Naive thymus-derived CD4-positive, alpha-beta T cell (primary cell): ENCODE measurements at regions of chr2 and their contacts with region 1.

Region 1: GRCh38 chr2:10302479-10303180 is at the start of gene HPCAL1:
- DNase-seq: peak; percentile 69 to 90 (median 84)
- ATAC-seq: peak; percentile 85
- H3K4me3 ChIP-seq: peak within 1 kb of the TSS; percentile 72
- H3K4me3 Mint-ChIP-seq: peak within 1 kb of the TSS; percentile 89 to 100 (median 99)
- H3K27ac ChIP-seq: peak within 1 kb of the TSS; percentile 78
- H3K27ac Mint-ChIP-seq: peak within 1 kb of the TSS; percentile 85 to 97 (median 94)
- H3K4me1 ChIP-seq: peaks cover 42 to 62% of the 10 kb centered on the region in 2 donors
- H3K4me1 Mint-ChIP-seq: peaks cover 46 to 77% (median 66%) of the 10 kb centered on the region in 7 donors
- H3K27me3 ChIP-seq: no peaks in the 10 kb centered on the region
- H3K27me3 Mint-ChIP-seq: no peaks in the 10 kb centered on the region
- total RNA-seq, gene HPCAL1: 44.9 to 90.5 (median 65.8) TPM

Region 2: DNA sequence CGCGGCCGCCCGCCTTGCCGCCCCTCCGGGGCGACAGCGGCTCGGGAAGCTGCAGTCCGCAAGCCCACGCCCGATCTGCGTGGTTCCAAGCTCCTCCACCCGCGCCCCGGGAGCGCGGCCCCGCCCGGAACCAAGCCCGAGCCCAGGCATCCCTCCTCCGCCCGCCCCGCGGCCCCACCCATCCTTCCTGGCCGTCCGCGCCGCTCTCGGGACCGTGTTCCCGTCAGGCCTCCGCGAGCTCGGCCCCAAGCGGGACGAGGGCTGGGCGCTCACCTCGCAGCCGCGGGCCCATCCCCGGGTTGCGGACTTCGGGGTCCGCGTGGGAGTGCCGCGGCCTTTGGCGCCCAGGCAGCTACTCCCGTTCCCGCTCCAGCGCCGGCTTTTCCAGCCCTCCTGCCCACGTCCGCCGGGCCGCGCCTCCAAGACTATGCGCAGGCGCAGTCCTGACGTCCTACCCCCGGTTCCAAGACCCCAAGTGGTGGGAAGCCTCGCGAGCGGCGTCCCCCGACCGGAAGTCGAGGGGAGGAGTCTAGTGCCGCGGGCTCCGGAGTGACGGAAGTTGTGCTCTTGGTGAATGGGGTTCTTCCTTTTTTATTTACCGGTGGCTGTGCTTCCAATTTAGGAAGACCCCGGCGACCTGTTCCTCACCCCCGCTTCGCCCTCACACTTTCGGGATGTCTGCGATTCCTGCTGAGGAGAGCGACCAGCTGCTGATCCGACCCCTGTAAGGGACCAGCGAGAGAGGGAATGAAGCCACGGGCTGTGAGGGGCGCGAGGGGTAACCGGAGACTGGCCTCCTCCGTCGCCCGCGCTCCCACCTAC is 879.3 kb before region 1 on chr2 and contains the starts of genes CPSF3 and ITGB1BP1:
- CTCF ChIA-PET with region 1: no interaction called
- POLR2A ChIA-PET with region 1: no interaction called
- intact Hi-C with region 1: loop called (anchors 2 kb)
- DNase-seq: peak; percentile 88 to 98 (median 94)
- ATAC-seq: peak; percentile 92
- H3K4me3 ChIP-seq: peak within 1 kb of the TSS; percentile 90
- H3K4me3 Mint-ChIP-seq: peak within 1 kb of the TSS in 5 of 10 donors; percentile 87 to 95 (median 92)
- H3K27ac ChIP-seq: peak within 1 kb of the TSS; percentile 84
- H3K27ac Mint-ChIP-seq: peak within 1 kb of the TSS in 8 of 9 donors; percentile 82 to 97 (median 92)
- H3K4me1 ChIP-seq: peaks cover 22 to 24% of the 10 kb centered on the region in 2 donors
- H3K4me1 Mint-ChIP-seq: peaks cover 20 to 41% (median 28%) of the 10 kb centered on the region in 7 donors
- H3K27me3 ChIP-seq: no peaks in the 10 kb centered on the region
- H3K27me3 Mint-ChIP-seq: no peaks in the 10 kb centered on the region
- total RNA-seq, gene CPSF3: 18.0 to 47.8 (median 21.7) TPM
- total RNA-seq, gene ITGB1BP1: 45.1 to 107 (median 54.3) TPM

Region 3: DNA sequence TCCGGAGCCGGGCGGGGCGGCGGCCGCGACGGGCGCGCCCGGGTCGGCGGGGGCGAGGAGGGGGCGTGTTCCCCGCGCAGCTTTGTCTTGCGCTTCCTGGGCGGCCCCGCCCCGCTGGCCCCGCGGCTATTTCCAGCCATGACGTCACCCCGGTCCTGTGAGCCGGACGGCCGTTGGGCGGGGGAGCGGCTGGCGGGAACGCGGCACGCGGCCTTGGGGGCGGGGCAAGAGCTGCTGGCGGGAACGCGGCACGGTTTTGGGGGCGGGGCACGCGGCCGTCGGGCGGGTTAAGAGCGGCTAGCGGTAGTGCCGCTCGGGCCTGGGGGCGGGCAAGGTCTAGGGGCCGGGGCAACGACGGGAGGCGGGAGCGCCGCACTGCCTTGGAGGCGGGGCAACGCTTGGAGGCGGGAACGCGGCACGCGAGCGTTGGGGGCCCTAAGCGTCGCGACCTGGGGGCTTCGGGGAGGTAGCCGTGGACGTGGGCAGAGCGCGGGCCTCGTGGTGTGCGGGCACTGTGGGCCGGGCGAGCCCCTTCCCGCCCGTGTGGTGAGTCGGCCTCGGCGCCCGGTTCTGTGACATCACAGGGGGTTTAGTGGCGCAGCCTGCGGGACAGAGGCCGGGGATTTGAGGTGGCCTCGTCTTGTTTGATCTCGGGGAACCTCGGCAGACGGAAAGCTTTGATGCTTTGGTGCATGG is 258.6 kb before region 1 on chr2:
- CTCF ChIA-PET with region 1: interaction called, 3 read pairs
- POLR2A ChIA-PET with region 1: no interaction called
- intact Hi-C with region 1: loop called in 1 of 2 experiments (anchors 2 kb)
- DNase-seq: peak; percentile 79 to 93 (median 89)
- ATAC-seq: peak; percentile 73
- H3K4me3 ChIP-seq: peak overlapping the region; percentile 48
- H3K4me3 Mint-ChIP-seq: peak overlapping the region; percentile 76 to 89 (median 84)
- H3K27ac ChIP-seq: peak overlapping the region; percentile 76
- H3K27ac Mint-ChIP-seq: peak overlapping the region; percentile 82 to 95 (median 88)
- H3K4me1 ChIP-seq: peaks cover 6% of the 10 kb centered on the region in 2 donors
- H3K4me1 Mint-ChIP-seq: peaks cover 14 to 35% (median 29%) of the 10 kb centered on the region in 7 donors
- H3K27me3 ChIP-seq: no peaks in the 10 kb centered on the region
- H3K27me3 Mint-ChIP-seq: peaks cover 0 to 31% (median 0%) of the 10 kb centered on the region in 5 donors

Region 4: DNA sequence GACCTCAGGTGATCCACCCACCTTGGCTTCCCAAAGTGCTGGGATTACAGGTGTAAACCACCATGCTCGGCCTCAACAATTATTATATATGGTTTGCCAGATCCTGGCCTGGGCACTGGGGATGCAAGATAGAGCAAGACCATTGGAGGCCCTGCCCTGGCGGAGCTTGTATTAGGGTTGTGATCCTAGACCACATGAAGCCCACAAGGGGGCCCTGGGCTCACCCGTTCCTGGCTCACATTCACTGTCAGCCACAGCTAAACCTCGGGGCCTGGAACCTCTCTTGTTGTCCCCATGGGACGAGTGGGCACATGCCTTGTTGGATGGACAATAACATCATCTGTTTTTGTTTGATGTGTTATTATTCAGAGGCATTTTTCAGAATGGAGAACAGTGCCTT is 15.0 kb after region 1 on chr2:
- CTCF ChIA-PET with region 1: interaction called, 5 read pairs
- POLR2A ChIA-PET with region 1: interaction called, 5 read pairs
- intact Hi-C with region 1: loop called in 1 of 2 experiments (anchors 1 kb)
- DNase-seq: no peak
- ATAC-seq: no peak
- H3K4me3 ChIP-seq: no peak overlapping the region
- H3K4me3 Mint-ChIP-seq: peak overlapping the region in 1 of 10 donors; percentile 16
- H3K27ac ChIP-seq: no peak overlapping the region
- H3K27ac Mint-ChIP-seq: peak overlapping the region in 7 of 9 donors; percentile 19 to 81 (median 60)
- H3K4me1 ChIP-seq: peaks cover 0 to 15% of the 10 kb centered on the region in 2 donors
- H3K4me1 Mint-ChIP-seq: peaks cover 13 to 81% (median 58%) of the 10 kb centered on the region in 7 donors
- H3K27me3 ChIP-seq: no peaks in the 10 kb centered on the region
- H3K27me3 Mint-ChIP-seq: no peaks in the 10 kb centered on the region

Region 5: DNA sequence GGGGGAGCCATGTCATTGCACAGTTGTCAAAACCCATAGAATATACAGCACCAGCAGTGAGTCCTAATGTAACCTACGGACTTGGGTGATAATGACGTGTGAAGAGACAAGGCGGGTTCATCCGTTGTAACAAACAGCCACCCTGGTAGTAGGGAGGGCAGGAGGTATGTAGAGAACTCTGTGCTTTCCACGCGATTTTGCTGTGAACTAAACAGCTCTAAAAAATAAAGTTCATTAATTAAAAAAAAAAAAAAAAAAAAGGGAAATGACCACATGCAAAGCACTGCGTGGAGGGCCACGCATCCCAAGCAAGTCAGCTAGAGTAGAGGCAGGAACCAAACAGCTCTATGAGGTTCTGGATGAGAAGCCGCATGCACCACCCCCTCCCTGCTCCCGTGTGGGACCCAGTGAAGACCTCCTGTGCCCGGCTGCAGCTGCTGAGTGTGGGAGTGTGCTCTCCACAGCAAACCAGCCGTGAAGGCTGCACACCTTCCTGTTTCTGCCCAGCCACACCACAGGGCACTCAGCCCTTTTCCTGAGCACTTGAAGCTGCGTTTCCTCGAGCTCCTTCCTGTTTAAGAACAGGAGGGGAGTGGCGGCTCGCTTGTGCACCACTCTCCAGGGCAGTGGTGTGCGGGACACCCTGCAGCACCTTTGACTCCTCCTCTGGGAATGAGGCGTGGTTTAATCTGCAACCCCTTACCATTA is 79.9 kb after region 1 on chr2:
- CTCF ChIA-PET with region 1: interaction called, 7 read pairs
- POLR2A ChIA-PET with region 1: interaction called, 23 read pairs
- intact Hi-C with region 1: loop called in 1 of 2 experiments (anchors 1 kb)
- DNase-seq: peak in 7 of 9 donors; percentile 59 to 81 (median 73)
- ATAC-seq: peak; percentile 91
- H3K4me3 ChIP-seq: peak overlapping the region; percentile 57
- H3K4me3 Mint-ChIP-seq: peak overlapping the region; percentile 46 to 86 (median 81)
- H3K27ac ChIP-seq: peak overlapping the region; percentile 64
- H3K27ac Mint-ChIP-seq: peak overlapping the region in 8 of 9 donors; percentile 66 to 96 (median 91)
- H3K4me1 ChIP-seq: peaks cover 57 to 90% of the 10 kb centered on the region in 2 donors
- H3K4me1 Mint-ChIP-seq: peaks cover 70 to 96% (median 93%) of the 10 kb centered on the region in 7 donors
- H3K27me3 ChIP-seq: no peaks in the 10 kb centered on the region
- H3K27me3 Mint-ChIP-seq: no peaks in the 10 kb centered on the region

Region 6: DNA sequence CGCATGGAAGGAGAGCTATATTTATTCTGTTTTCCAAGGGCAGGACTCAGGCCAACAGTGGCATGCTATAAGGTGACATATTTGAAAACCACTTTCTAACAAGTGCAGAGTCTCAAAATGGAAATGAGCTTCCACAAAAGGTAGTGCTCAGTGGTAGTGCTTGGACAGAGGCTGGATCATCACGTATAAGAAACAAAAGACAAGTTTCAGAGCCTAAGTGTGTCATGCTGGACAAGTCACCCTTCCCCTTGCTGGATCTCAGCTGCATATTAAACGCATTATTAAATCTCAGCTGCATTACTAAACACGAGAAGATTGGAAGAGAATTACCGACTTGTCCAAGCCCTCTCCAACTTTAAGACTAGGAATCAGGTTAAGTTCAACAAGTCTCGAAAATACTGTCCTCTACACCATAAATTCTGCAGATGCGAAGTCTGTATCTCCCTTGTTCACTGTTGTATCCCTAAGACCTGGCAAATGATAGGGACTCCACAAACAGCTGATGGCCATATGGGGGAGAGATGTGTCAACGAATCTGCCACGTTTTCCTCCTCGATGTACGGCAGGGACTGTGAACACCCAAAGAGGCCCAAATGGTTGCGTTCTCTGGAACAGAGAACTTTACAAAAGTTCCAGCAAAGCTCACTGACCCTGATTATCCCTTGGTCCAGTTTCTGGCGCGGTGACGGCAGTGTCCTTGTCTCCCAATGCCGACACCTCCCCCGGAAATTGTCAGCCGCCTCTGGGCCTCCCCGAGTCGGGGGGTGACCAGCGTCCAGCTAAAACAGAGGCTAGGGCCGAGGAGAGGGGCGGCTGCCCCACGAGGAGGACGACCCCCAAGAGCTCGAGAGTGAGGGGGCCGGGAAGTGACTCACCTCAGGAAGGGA is 386.5 kb after region 1 on chr2:
- CTCF ChIA-PET with region 1: no interaction called
- POLR2A ChIA-PET with region 1: no interaction called
- intact Hi-C with region 1: loop called in 1 of 2 experiments (anchors 10 kb)
- DNase-seq: peak in 2 of 9 donors; percentile 6 to 8
- ATAC-seq: peak; percentile 15
- H3K4me3 ChIP-seq: peak overlapping the region; percentile 92
- H3K4me3 Mint-ChIP-seq: no peak overlapping the region
- H3K27ac ChIP-seq: peak overlapping the region; percentile 84
- H3K27ac Mint-ChIP-seq: no peak overlapping the region
- H3K4me1 ChIP-seq: peaks cover 13 to 16% of the 10 kb centered on the region in 2 donors
- H3K4me1 Mint-ChIP-seq: peaks cover 3 to 14% (median 6%) of the 10 kb centered on the region in 7 donors
- H3K27me3 ChIP-seq: no peaks in the 10 kb centered on the region
- H3K27me3 Mint-ChIP-seq: peaks cover 0 to 2% (median 0%) of the 10 kb centered on the region in 5 donors